Astrocyte of the cerebellum (primary cell): ENCODE measurements at regions of chr20 and their contacts with region 1.

Region 1: DNA sequence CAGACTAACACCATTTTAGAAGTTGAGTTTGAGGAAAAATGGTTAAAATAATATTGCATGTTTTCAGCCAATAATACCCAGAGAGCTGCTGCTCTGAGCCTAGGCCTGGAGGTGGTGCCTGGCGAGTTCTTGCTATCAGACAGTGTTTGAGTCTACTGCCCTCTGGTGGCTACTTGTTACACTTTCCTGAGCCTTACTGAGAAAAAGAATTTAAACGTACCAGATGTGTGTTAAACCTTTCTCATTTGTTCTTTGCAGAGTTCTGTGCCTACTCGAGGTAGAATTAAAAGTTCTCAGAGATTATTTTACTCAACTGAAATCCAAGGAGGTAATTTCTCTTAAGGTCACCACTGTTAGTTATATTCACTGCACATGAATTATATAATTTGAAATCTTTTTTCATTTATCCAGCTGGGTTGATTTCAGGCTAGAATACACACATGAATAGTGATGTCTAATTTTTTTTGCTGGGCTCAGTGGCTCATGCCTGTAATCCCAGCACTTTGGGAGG is 38.2 kb downstream of the SHLD1 start:
- DNase-seq: peak; percentile 83
- H3K4me3 ChIP-seq: no peak overlapping the region
- CTCF ChIP-seq: peak; percentile 83

Region 2: DNA sequence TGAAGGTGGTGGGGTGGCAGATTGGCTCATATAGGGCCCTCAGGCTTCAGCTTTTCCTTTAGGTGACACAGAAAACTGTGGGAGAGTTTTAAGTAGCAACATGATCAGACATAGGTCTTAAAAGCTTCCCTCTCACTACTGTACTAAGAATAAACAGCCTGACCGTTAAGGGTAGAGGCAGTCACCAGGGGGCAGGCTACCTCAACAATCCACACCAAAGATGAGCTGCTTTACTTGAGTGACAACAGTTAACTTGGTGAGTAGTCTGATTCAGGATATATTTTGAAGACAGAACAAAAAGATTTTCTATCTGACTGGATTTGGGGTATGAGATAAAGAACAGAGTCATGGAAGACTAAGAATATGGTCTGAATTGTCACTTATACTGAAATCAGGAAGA is 231.3 kb before region 1 on chr20:
- in situ Hi-C with region 1: loop called (anchors 25 kb)
- DNase-seq: peak; percentile 12
- H3K4me3 ChIP-seq: no peak overlapping the region
- CTCF ChIP-seq: peak; percentile 69

Region 3: DNA sequence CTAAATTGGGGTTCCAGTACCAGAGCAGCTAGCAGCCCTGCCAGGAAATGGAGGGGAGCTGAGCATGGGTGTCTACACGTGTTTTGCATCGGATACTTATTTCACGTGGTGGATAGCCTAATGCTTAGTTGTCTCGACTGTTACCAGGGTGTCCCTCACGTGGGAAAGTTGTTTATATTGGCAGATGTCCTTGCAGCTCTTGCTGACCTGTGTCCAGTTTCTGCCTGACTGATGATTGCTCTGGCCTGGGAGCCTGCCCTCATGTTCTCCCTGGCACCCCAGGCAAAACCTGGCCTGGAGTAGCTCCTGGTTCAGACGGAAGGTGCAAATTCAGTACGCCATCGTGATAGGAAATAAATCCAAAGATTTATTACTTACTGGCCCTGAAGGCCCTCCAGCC is 346.2 kb after region 1 on chr20:
- in situ Hi-C with region 1: no loop called
- DNase-seq: no peak
- H3K4me3 ChIP-seq: no peak overlapping the region
- CTCF ChIP-seq: no peak